Activated CD4-positive, alpha-beta memory T cell treated with anti-CD3 and anti-CD28 coated beads, Interleukin-2, amount 10 ng/mL, durations not matched to agents 7 days and 5 days (primary cell): ENCODE measurements at regions of chr20 and their contacts with region 1.

Region 1: DNA sequence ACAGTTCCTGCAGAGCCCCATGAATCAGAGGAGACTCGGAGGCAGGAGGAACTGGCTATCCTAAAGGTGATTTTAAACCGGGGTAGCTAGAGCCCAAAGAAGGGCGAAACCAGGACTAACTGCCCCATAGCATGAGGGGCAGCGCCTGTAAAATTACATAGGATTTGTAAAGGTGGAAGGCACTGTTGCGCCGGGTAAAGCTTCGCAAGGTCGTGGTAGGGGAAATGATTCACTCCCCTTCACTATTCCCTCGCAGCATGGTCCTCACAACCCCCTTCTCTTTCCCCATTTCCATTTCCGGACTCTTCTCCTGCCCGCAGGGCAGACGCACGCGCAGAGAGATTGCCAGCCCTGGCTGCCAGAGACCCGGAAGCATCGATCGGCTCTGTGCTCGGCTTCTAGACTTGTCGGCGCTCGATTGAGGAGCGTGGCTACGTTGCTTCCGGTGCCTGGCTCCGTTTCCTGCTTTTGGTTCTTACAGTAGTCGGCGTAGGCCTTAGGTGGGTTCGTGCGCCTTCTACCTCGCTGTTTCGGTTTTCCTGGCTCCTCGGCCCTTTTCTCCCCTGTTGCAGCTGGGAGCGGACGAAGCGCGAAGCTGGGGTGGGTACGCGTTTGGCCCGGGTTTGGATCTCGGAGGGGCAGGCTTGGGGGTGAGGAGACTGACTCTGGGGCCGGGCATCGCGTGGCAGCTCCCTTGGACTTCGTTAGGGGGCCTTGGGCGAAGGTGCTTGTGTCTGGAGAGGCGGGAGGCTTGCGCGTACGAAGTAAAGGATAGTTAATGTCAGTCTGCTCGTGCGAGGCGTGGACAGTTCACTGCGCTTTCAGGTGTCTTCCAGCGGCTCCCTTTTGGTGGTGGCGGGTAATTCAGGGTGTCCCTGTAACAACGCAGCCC is at the start of gene SNRPB2:
- DNase-seq: peak; percentile 94
- H3K4me3 Mint-ChIP-seq: peak within 1 kb of the TSS; percentile 99
- H3K27ac Mint-ChIP-seq: peak within 1 kb of the TSS; percentile 99
- H3K4me1 Mint-ChIP-seq: peaks cover 55% of the 10 kb centered on the region
- H3K27me3 Mint-ChIP-seq: peaks cover 14% of the 10 kb centered on the region
- total RNA-seq, gene SNRPB2: 105 to 107 TPM

Region 2: DNA sequence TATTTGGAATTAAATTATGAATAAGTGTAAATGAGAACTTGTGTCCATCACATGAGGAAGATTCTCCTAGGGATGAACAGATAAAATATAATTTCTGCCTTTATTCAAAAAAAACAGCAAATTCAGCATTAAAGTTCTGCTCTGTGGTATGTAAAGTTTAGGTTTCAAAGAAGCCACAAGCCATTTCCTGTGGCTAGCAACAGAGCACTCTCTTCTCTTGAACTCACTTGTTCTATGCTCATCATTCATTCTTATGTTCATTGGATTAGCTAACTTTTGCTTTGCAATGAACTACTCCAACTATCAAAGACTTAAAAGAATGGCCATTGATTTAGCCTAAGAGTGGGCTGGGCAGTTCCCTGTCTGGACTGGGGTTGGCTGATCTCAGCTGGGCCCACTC is 20.8 kb before region 1 on chr20:
- CTCF ChIA-PET with region 1: interaction called, 4 read pairs
- POLR2A ChIA-PET with region 1: interaction called, 19 read pairs
- DNase-seq: peak; percentile 44
- H3K4me3 Mint-ChIP-seq: peak overlapping the region; percentile 8
- H3K27ac Mint-ChIP-seq: peak overlapping the region; percentile 40
- H3K4me1 Mint-ChIP-seq: peaks cover 29% of the 10 kb centered on the region
- H3K27me3 Mint-ChIP-seq: peaks cover 20% of the 10 kb centered on the region